CD4-positive, alpha-beta memory T cell (primary cell): ENCODE measurements at regions of chr5 and their contacts with region 1.

Region 1: GRCh38 chr5:141512390-141512910 is 23.6 kb downstream of the PCDHGC5 start:
- DNase-seq: peak; percentile 73 to 80 (median 76)
- H3K4me3 ChIP-seq: peak overlapping the region in 1 of 2 donors; percentile 70
- H3K4me3 Mint-ChIP-seq: peak overlapping the region; percentile 76 to 95 (median 90)
- H3K27ac ChIP-seq: no peak overlapping the region
- H3K27ac Mint-ChIP-seq: peak overlapping the region; percentile 6 to 89 (median 67)
- H3K4me1 ChIP-seq: peaks cover 20% of the 10 kb centered on the region
- H3K4me1 Mint-ChIP-seq: peaks cover 14 to 28% (median 22%) of the 10 kb centered on the region in 4 donors
- H3K27me3 ChIP-seq: no peaks in the 10 kb centered on the region
- H3K27me3 Mint-ChIP-seq: peaks cover 0 to 3% of the 10 kb centered on the region in 2 donors

Region 2: DNA sequence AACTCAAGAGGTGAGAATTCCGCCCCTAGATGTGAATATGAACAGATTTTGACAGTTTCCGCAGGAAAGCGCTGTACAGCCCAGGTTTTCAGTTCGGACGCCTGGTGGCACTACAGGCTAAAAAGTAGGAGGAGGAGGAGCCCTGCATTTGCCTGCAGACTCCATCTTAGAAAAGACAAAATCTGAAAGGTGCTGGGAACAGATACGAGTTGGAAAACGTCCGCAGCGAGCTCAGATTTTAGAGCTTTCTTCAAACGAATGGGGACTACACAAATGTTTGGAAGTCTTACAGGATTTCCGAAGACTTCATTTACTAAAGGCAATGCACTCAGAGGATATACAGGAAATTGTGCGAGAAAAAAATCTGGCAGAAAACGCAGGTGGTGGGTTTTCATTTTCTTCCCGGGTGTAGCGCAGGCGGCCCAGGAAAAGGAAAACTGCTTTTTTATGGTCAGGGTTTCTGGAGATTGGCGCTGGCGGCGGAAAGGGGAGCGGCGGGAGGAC is 427.9 kb before region 1 on chr5:
- CTCF ChIA-PET with region 1: no interaction called
- POLR2A ChIA-PET with region 1: no interaction called
- intact Hi-C with region 1: loop called (anchors 5 kb)
- DNase-seq: peak; percentile 31 to 57 (median 41)
- H3K4me3 ChIP-seq: peak overlapping the region in 1 of 2 donors; percentile 15
- H3K4me3 Mint-ChIP-seq: peak overlapping the region; percentile 82 to 95 (median 90)
- H3K27ac ChIP-seq: no peak overlapping the region
- H3K27ac Mint-ChIP-seq: peak overlapping the region in 4 of 7 donors; percentile 38 to 83 (median 58)
- H3K4me1 ChIP-seq: no peaks in the 10 kb centered on the region
- H3K4me1 Mint-ChIP-seq: peaks cover 2 to 15% (median 6%) of the 10 kb centered on the region in 4 donors
- H3K27me3 ChIP-seq: no peaks in the 10 kb centered on the region
- H3K27me3 Mint-ChIP-seq: peaks cover 7 to 14% of the 10 kb centered on the region in 2 donors

Region 3: GRCh38 chr5:141320225-141321169 is 192.0 kb before region 1 on chr5 and contains the start of gene TAF7:
- CTCF ChIA-PET with region 1: interaction called, 20 read pairs
- POLR2A ChIA-PET with region 1: interaction called, 10 read pairs
- intact Hi-C with region 1: loop called (anchors 1 kb)
- DNase-seq: peak; percentile 92 to 93 (median 93)
- H3K4me3 ChIP-seq: peak within 1 kb of the TSS; percentile 54 to 77
- H3K4me3 Mint-ChIP-seq: peak within 1 kb of the TSS; percentile 90 to 99 (median 98)
- H3K27ac ChIP-seq: peak within 1 kb of the TSS; percentile 97
- H3K27ac Mint-ChIP-seq: peak within 1 kb of the TSS; percentile 93 to 100 (median 97)
- H3K4me1 ChIP-seq: peaks cover 15% of the 10 kb centered on the region
- H3K4me1 Mint-ChIP-seq: peaks cover 20 to 32% (median 26%) of the 10 kb centered on the region in 4 donors
- H3K27me3 ChIP-seq: no peaks in the 10 kb centered on the region
- H3K27me3 Mint-ChIP-seq: peaks cover 0 to 2% of the 10 kb centered on the region in 2 donors
- total RNA-seq, gene TAF7: 109 to 119 TPM

Region 4: DNA sequence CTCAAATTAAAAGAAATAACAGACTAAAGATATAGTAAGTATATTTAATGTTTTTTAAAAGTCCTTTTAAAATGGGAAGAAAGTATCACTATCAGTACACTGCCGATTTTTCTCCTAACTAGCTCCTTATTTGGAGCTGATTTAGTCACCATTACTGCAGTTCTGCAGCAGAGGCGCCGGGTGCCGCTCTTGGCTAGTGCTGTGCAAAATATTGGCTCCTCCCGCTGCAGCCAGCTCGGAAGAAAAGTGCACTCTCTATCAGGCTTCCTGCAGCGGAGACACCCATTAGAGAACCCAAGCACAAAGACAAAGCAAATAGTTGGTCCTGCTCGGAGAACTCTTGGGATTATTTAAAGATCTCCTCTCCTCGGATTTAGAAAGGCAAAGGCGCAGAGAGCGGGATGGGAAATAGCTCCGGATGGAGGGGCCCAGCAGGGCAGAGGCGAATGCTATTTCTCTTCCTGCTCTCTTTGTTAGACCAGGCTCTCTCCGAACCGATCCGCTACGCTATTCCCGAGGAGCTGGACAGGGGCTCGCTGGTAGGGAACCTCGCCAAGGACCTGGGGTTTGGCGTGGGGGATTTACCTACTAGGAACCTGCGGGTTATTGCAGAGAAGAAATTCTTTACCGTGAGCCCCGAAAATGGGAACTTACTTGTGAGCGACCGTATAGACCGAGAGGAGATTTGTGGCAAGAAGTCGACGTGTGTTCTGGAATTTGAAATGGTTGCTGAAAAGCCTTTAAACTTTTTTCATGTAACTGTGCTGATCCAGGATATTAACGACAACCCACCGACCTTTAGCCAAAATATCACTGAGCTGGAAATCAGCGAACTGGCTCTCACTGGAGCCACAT is 142.2 kb before region 1 on chr5 and contains the start of gene PCDHGB3:
- CTCF ChIA-PET with region 1: interaction called, 12 read pairs
- POLR2A ChIA-PET with region 1: no interaction called
- intact Hi-C with region 1: loop called (anchors 1 kb)
- DNase-seq: peak in 4 of 5 donors; percentile 30 to 49 (median 37)
- H3K4me3 ChIP-seq: peak within 1 kb of the TSS in 1 of 2 donors; percentile 15
- H3K4me3 Mint-ChIP-seq: peak within 1 kb of the TSS; percentile 69 to 89 (median 83)
- H3K27ac ChIP-seq: no peak within 1 kb of the TSS
- H3K27ac Mint-ChIP-seq: peak within 1 kb of the TSS in 1 of 7 donors; percentile 68
- H3K4me1 ChIP-seq: peaks cover 6% of the 10 kb centered on the region
- H3K4me1 Mint-ChIP-seq: peaks cover 4 to 11% (median 8%) of the 10 kb centered on the region in 4 donors
- H3K27me3 ChIP-seq: peaks cover 20% of the 10 kb centered on the region
- H3K27me3 Mint-ChIP-seq: peaks cover 43 to 46% of the 10 kb centered on the region in 2 donors
- total RNA-seq, gene PCDHGB3: 0.50 to 0.76 TPM

Region 5: DNA sequence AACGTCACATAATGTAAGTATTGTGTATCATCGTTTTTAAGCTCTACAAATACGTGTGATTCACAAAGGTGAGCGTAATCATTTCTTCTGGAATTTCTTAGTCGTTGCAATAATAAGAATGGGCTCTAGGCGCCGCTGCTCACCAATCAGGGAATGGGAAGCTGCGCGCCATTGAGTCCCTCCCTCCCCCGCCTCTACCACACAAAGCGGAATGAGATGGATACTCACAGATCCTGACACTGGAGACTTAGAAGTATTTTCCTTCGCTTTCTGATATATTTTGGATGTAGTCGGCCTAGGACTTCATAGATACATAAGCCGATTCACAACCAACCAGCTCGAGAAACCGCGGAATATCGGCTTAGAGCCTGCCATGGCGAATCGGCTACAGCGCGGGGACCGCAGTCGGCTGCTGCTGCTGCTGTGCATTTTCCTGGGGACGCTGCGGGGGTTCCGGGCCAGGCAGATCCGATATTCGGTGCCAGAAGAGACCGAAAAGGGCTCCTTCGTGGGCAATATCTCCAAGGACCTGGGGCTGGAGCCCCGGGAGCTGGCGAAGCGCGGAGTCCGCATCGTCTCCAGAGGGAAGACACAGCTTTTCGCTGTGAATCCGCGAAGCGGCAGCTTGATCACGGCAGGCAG is 91.5 kb before region 1 on chr5 and contains the start of gene PCDHGA11:
- CTCF ChIA-PET with region 1: interaction called, 37 read pairs
- POLR2A ChIA-PET with region 1: no interaction called
- intact Hi-C with region 1: no loop called
- DNase-seq: peak in 1 of 5 donors; percentile 31
- H3K4me3 ChIP-seq: peak within 1 kb of the TSS; percentile 33 to 42
- H3K4me3 Mint-ChIP-seq: peak within 1 kb of the TSS; percentile 77 to 83 (median 80)
- H3K27ac ChIP-seq: no peak within 1 kb of the TSS
- H3K27ac Mint-ChIP-seq: peak within 1 kb of the TSS in 5 of 7 donors; percentile 10 to 93 (median 84)
- H3K4me1 ChIP-seq: peaks cover 8% of the 10 kb centered on the region
- H3K4me1 Mint-ChIP-seq: peaks cover 0 to 11% (median 3%) of the 10 kb centered on the region in 4 donors
- H3K27me3 ChIP-seq: peaks cover 41% of the 10 kb centered on the region
- H3K27me3 Mint-ChIP-seq: peaks cover 52 to 63% of the 10 kb centered on the region in 2 donors
- total RNA-seq, gene PCDHGA11: 0.20 to 0.36 TPM

Region 6: GRCh38 chr5:141524604-141525597 is 12.5 kb after region 1 on chr5:
- CTCF ChIA-PET with region 1: interaction called, 144 read pairs
- POLR2A ChIA-PET with region 1: interaction called, 12 read pairs
- intact Hi-C with region 1: loop called (anchors 1 kb)
- DNase-seq: peak; percentile 46 to 62 (median 51)
- H3K4me3 ChIP-seq: no peak overlapping the region
- H3K4me3 Mint-ChIP-seq: no peak overlapping the region
- H3K27ac ChIP-seq: no peak overlapping the region
- H3K27ac Mint-ChIP-seq: peak overlapping the region in 5 of 7 donors; percentile 26 to 72 (median 57)
- H3K4me1 ChIP-seq: peaks cover 15% of the 10 kb centered on the region
- H3K4me1 Mint-ChIP-seq: peaks cover 11 to 28% (median 21%) of the 10 kb centered on the region in 4 donors
- H3K27me3 ChIP-seq: no peaks in the 10 kb centered on the region
- H3K27me3 Mint-ChIP-seq: no peaks in the 10 kb centered on the region